ENCODE measurements at regions of chr4 and their contacts with region 1.

Region 1: GRCh38 chr4:122732329-122733026 is at the start of gene BBS12:
- DNase-seq: peak; percentile 100
- H3K4me3 Mint-ChIP-seq: peak within 1 kb of the TSS; percentile 91
- H3K27ac Mint-ChIP-seq: peak within 1 kb of the TSS; percentile 83
- H3K4me1 Mint-ChIP-seq: peaks cover 17% of the 10 kb centered on the region
- H3K27me3 Mint-ChIP-seq: no peaks in the 10 kb centered on the region
- total RNA-seq, gene BBS12: 1.7 to 2.2 TPM

Region 2: DNA sequence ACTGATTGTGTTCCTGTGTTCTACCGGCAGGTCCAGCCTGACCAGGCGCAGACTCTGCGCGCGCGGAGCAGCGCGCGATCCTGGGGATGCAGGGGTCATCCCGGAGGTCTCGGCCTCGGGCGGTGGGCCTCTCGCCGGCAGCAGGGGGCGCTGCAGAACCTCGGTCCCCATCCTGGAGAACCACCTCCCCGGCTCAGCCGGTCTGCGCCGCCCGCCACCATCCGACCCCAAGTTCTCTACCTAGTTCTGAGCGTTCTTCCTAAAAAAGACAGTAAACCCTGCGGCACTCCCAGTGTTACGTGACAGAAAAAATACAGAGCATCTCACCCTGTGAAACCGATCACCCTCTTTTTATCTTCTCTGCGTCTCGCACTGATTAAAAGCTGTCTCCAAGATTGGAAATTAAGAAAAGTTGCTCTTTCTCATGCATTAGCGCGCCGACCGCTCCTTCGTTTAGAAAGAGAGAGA is 782.2 kb before region 1 on chr4:
- CTCF ChIA-PET with region 1: interaction called, 3 read pairs
- intact Hi-C with region 1: loop called (anchors 5 kb)
- DNase-seq: peak; percentile 92
- H3K4me3 Mint-ChIP-seq: peak overlapping the region; percentile 86
- H3K27ac Mint-ChIP-seq: no peak overlapping the region
- H3K4me1 Mint-ChIP-seq: peaks cover 5% of the 10 kb centered on the region
- H3K27me3 Mint-ChIP-seq: peaks cover 32% of the 10 kb centered on the region

Region 3: DNA sequence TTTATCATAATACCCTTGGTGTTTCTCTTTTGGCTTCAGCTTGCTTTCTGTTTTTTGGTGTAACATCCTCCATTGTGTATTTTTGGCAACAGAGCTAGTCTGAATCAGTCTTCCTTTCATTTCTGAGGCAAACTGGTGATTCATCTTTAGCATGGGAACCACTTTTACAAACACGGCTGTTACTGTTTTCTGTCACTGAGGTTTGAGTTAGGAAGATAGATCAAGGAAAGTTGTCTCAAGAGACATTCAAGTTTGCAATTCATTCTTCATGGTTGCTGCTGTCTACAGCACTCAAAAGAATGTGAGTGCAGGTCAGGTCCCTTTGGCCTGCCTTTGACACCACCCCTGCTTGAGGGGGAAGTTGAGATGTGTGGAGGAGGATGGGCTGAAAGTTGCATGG is 148.0 kb before region 1 on chr4:
- CTCF ChIA-PET with region 1: interaction called, 3 read pairs
- intact Hi-C with region 1: loop called (anchors 1 kb)
- DNase-seq: peak; percentile 42
- H3K4me3 Mint-ChIP-seq: peak overlapping the region; percentile 50
- H3K27ac Mint-ChIP-seq: peak overlapping the region; percentile 100
- H3K4me1 Mint-ChIP-seq: peaks cover 65% of the 10 kb centered on the region
- H3K27me3 Mint-ChIP-seq: no peaks in the 10 kb centered on the region

Region 4: GRCh38 chr4:122650148-122650547 is 82.3 kb before region 1 on chr4:
- CTCF ChIA-PET with region 1: no interaction called
- intact Hi-C with region 1: no loop called
- DNase-seq: no peak
- H3K4me3 Mint-ChIP-seq: no peak overlapping the region
- H3K27ac Mint-ChIP-seq: no peak overlapping the region
- H3K4me1 Mint-ChIP-seq: peaks cover 5% of the 10 kb centered on the region
- H3K27me3 Mint-ChIP-seq: no peaks in the 10 kb centered on the region

Region 5: DNA sequence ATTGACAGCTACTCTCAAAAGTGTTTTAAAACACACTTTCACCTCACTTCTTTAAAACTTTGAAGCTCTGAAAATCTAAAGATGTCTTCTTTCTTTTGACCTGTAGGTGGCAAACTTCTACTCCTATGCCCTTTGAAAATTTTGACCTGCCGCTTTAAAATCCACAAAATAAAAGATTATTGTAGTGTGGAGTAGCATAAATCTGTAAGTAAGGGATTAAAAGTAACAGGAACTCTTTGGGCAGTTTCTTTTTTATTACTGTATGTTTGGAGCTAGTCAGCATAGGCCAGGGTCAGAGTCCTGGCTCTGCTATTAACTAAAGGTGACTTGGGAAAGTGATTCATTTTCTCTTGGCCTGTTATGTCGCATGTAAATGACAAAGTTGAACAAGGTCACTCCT is 25.6 kb after region 1 on chr4:
- CTCF ChIA-PET with region 1: interaction called, 7 read pairs
- intact Hi-C with region 1: loop called (anchors 2 kb)
- DNase-seq: no peak
- H3K4me3 Mint-ChIP-seq: no peak overlapping the region
- H3K27ac Mint-ChIP-seq: no peak overlapping the region
- H3K4me1 Mint-ChIP-seq: peaks cover 18% of the 10 kb centered on the region
- H3K27me3 Mint-ChIP-seq: peaks cover 10% of the 10 kb centered on the region

Region 6: DNA sequence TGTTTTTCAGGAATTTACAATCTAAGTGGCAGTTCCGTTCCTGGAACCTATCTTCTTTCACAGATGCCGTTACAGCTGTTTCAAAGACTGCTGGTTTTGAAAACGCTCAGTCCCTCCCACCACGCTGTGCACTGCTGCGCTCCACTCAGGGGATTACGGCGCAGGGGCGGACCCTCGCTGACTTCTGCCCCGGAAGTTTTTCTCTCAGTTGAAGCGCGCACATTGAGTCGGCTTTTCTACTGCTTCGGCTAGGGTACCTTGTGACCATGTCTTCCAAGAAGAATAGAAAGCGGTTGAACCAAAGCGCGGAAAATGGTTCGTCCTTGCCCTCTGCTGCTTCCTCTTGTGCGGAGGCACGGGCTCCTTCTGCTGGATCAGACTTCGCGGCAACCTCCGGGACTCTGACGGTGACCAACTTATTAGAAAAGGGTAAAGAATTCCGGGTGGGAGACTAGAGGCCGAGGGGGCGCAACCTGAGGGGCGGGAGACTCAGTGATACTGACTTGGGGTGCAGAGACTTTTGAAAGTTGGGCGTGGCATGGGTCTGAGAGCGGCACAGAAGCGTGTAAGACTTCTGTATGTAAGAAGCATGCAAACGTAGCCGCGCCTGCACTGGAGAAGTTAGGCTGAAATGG is 190.5 kb after region 1 on chr4:
- CTCF ChIA-PET with region 1: interaction called, 6 read pairs
- intact Hi-C with region 1: loop called (anchors 1 kb)
- DNase-seq: peak; percentile 94
- H3K4me3 Mint-ChIP-seq: peak overlapping the region; percentile 99
- H3K27ac Mint-ChIP-seq: peak overlapping the region; percentile 87
- H3K4me1 Mint-ChIP-seq: peaks cover 11% of the 10 kb centered on the region
- H3K27me3 Mint-ChIP-seq: peaks cover 2% of the 10 kb centered on the region